Heart right ventricle (tissue), 16 donors: ENCODE measurements at regions of chr7 and their contacts with region 1.

Region 1: GRCh38 chr7:124784879-124785818 is 19.6 kb upstream of the GPR37 start:
- DNase-seq: no peak
- ATAC-seq: peak in 5 of 8 donors; percentile 28 to 82 (median 44)
- H3K4me3 ChIP-seq: no peak overlapping the region
- H3K27ac ChIP-seq: no peak overlapping the region
- H3K4me1 ChIP-seq: no peaks in the 10 kb centered on the region
- H3K27me3 ChIP-seq: peaks cover 0 to 10% (median 0%) of the 10 kb centered on the region in 7 donors
- CTCF ChIP-seq: peak; percentile 14 to 71 (median 63)

Region 2: DNA sequence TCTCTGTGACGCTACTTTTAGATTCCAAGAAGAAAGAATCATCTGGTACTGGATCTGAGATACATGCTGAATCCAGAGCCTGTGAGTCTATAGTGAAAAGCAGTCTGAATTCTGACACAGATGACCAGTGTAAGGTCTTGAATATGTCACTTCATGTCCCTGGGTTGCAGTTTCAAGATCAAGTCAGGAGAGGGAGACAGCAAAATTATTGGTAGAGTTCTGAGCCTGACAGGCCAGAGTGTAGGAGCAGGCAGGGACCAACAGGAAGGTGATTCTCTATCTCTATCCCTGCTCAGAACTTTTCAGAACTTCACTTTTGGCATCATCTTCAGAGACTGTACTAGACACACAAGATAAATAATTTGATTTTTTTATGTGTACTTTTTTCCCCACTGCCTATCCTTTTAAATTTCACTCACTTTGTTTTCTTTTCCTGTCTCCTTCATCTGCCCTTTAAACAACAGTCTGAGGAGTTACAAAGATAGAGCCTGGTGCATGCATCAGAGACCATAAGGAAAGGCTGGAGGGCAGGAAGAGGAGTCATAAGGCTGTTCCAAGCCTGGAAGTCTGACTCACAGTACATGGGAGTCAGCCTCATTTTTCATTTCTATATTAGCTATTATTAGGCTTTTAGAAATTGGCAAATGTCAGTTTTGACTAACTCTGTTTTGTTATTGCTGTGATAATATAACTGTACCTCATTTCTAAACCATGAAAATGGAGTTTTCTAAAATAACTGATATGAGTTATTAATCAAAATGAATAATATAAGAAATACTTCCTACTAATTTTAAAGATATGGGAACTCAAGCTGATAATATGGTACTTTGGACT is 632.1 kb before region 1 on chr7:
- intact Hi-C with region 1: loop called in 5 of 10 experiments (anchors 5 to 10 kb)
- DNase-seq: no peak
- ATAC-seq: peak in 1 of 8 donors; percentile 50
- H3K4me3 ChIP-seq: no peak overlapping the region
- H3K27ac ChIP-seq: no peak overlapping the region
- H3K4me1 ChIP-seq: no peaks in the 10 kb centered on the region
- H3K27me3 ChIP-seq: peaks cover 0 to 4% (median 0%) of the 10 kb centered on the region in 7 donors
- CTCF ChIP-seq: peak in 4 of 9 donors; percentile 22 to 35 (median 25)

Region 3: DNA sequence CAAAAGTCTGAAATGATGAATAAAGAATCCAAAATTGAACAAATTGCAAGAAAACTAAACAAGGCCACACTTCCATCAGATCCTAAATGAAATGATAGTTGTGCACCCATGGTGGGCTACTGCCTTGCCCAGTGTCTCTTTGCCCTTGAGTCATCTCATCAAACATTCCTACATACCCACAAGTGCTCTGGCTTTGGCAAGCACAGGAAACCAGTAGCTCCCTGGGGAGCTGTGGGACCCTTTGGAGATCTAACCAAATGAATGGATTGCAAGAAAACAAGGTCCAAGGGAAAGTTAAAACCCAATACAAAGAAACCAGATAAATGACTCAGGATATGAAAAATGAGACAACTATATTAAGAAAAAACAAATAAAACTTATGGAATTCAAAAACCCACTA is 622.5 kb before region 1 on chr7:
- intact Hi-C with region 1: loop called in 5 of 10 experiments (anchors 5 to 10 kb)
- DNase-seq: no peak
- ATAC-seq: no peak
- H3K4me3 ChIP-seq: no peak overlapping the region
- H3K27ac ChIP-seq: no peak overlapping the region
- H3K4me1 ChIP-seq: no peaks in the 10 kb centered on the region
- H3K27me3 ChIP-seq: no peaks in the 10 kb centered on the region
- CTCF ChIP-seq: no peak

Region 4: GRCh38 chr7:124171068-124171467 is 614.1 kb before region 1 on chr7:
- intact Hi-C with region 1: loop called in 7 of 10 experiments (anchors 2 to 10 kb)
- DNase-seq: peak; percentile 15 to 16
- ATAC-seq: no peak
- H3K4me3 ChIP-seq: no peak overlapping the region
- H3K27ac ChIP-seq: no peak overlapping the region
- H3K4me1 ChIP-seq: no peaks in the 10 kb centered on the region
- H3K27me3 ChIP-seq: no peaks in the 10 kb centered on the region
- CTCF ChIP-seq: peak in 7 of 9 donors; percentile 29 to 60 (median 50)

Region 5: GRCh38 chr7:124765401-124766352 is 19.5 kb before region 1 on chr7 and contains the start of gene GPR37:
- intact Hi-C with region 1: no loop called
- DNase-seq: peak in 1 of 2 donors; percentile 26
- ATAC-seq: peak; percentile 52 to 87 (median 72)
- H3K4me3 ChIP-seq: peak within 1 kb of the TSS; percentile 14 to 57 (median 46)
- H3K27ac ChIP-seq: no peak within 1 kb of the TSS
- H3K4me1 ChIP-seq: peaks cover 0 to 21% (median 15%) of the 10 kb centered on the region in 9 donors
- H3K27me3 ChIP-seq: peaks cover 14 to 70% (median 56%) of the 10 kb centered on the region in 7 donors
- CTCF ChIP-seq: no peak
- total RNA-seq, gene GPR37: 0.09 to 0.15 TPM in 2 of 10 donors, not detected in the others